ENCODE measurements at regions of chr7 and their contacts with region 1.

Region 1: GRCh38 chr7:80151274-80151665 is 16.6 kb downstream of the GNAI1 start:
- DNase-seq: peak; percentile 64
- H3K4me3 Mint-ChIP-seq: peak overlapping the region; percentile 70
- H3K27ac Mint-ChIP-seq: peak overlapping the region; percentile 95
- H3K4me1 Mint-ChIP-seq: peaks cover 43% of the 10 kb centered on the region
- H3K27me3 Mint-ChIP-seq: no peaks in the 10 kb centered on the region
- CTCF ChIP-seq: no peak

Region 2: GRCh38 chr7:79862447-79863210 is 288.6 kb before region 1 on chr7:
- CTCF ChIA-PET with region 1: no interaction called
- POLR2A ChIA-PET with region 1: no interaction called
- intact Hi-C with region 1: no loop called
- DNase-seq: no peak
- H3K4me3 Mint-ChIP-seq: no peak overlapping the region
- H3K27ac Mint-ChIP-seq: no peak overlapping the region
- H3K4me1 Mint-ChIP-seq: no peaks in the 10 kb centered on the region
- H3K27me3 Mint-ChIP-seq: peaks cover 78% of the 10 kb centered on the region
- CTCF ChIP-seq: no peak

Region 3: GRCh38 chr7:80218723-80219122 is 67.5 kb after region 1 on chr7:
- CTCF ChIA-PET with region 1: interaction called, 6 read pairs
- POLR2A ChIA-PET with region 1: interaction called, 8 read pairs
- intact Hi-C with region 1: loop called (anchors 5 kb)
- DNase-seq: peak; percentile 75
- H3K4me3 Mint-ChIP-seq: peak overlapping the region; percentile 24
- H3K27ac Mint-ChIP-seq: peak overlapping the region; percentile 85
- H3K4me1 Mint-ChIP-seq: peaks cover 23% of the 10 kb centered on the region
- H3K27me3 Mint-ChIP-seq: no peaks in the 10 kb centered on the region
- CTCF ChIP-seq: no peak